Mammary epithelial cell (primary cell): ENCODE measurements at regions of chr12 and their contacts with region 1.

Region 1: DNA sequence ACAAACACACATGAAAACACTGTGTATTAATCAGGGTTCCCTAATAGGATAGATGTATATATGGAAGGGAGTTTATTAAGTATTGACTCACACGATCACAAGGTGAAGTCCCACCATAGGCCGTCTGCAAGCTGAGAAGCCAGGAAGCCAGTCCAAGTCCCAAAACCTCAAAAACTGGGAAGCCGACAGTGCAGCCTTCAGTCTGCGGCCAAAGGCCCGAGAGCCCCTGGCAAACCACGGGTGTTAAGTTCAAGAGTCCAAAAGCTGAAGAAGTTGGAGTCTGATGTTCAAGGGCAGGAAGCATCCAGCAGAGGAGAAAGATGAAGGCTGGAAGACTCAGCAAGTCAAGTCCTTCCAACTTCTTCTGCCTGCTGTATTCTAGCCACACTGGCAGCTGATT is 1085.0 kb upstream of the TMEM132C start:
- DNase-seq: no peak
- H3K4me3 ChIP-seq: no peak overlapping the region
- H3K27ac ChIP-seq: no peak overlapping the region
- H3K4me1 ChIP-seq: no peaks in the 10 kb centered on the region
- H3K27me3 ChIP-seq: no peaks in the 10 kb centered on the region
- CTCF ChIP-seq: no peak

Region 2: GRCh38 chr12:127133675-127134335 is 48.2 kb before region 1 on chr12:
- CTCF ChIA-PET with region 1: no interaction called
- dilution Hi-C with region 1: loop called (anchors 5 kb)
- in situ Hi-C with region 1: no loop called
- intact Hi-C with region 1: no loop called
- DNase-seq: peak; percentile 33
- H3K4me3 ChIP-seq: no peak overlapping the region
- H3K27ac ChIP-seq: peak overlapping the region; percentile 42
- H3K4me1 ChIP-seq: peaks cover 7% of the 10 kb centered on the region
- H3K27me3 ChIP-seq: no peaks in the 10 kb centered on the region
- CTCF ChIP-seq: peak; percentile 15 to 39

Region 3: GRCh38 chr12:127223731-127224130 is 41.7 kb after region 1 on chr12:
- CTCF ChIA-PET with region 1: no interaction called
- dilution Hi-C with region 1: no loop called
- in situ Hi-C with region 1: no loop called
- intact Hi-C with region 1: no loop called
- DNase-seq: no peak
- H3K4me3 ChIP-seq: no peak overlapping the region
- H3K27ac ChIP-seq: no peak overlapping the region
- H3K4me1 ChIP-seq: peaks cover 2% of the 10 kb centered on the region
- H3K27me3 ChIP-seq: no peaks in the 10 kb centered on the region
- CTCF ChIP-seq: no peak

Region 4: DNA sequence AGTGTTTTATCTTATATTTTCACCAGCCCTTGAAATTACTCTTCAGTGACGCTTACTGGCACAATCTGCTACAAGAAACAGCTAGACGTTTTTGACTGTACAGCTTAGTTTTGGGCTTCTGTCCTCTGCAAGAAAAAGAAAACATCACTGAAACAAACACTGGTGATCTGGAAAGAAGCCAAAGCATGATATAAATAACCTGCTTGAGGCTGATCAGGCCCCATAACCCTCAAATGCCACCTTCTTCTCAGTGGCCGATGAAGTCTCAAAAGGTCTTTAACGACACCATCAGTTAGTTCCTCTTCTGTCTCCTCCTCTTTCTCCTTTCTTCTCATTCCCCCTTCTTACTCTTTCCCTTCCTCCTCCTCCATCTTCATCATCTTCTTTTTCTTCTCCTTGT is 142.7 kb after region 1 on chr12:
- CTCF ChIA-PET with region 1: no interaction called
- dilution Hi-C with region 1: no loop called
- in situ Hi-C with region 1: no loop called
- intact Hi-C with region 1: no loop called
- DNase-seq: no peak
- H3K4me3 ChIP-seq: no peak overlapping the region
- H3K27ac ChIP-seq: no peak overlapping the region
- H3K4me1 ChIP-seq: peaks cover 8% of the 10 kb centered on the region
- H3K27me3 ChIP-seq: no peaks in the 10 kb centered on the region
- CTCF ChIP-seq: no peak